Common myeloid progenitor, CD34-positive (primary cell): ENCODE measurements at regions of chr11 and their contacts with region 1.

Region 1: DNA sequence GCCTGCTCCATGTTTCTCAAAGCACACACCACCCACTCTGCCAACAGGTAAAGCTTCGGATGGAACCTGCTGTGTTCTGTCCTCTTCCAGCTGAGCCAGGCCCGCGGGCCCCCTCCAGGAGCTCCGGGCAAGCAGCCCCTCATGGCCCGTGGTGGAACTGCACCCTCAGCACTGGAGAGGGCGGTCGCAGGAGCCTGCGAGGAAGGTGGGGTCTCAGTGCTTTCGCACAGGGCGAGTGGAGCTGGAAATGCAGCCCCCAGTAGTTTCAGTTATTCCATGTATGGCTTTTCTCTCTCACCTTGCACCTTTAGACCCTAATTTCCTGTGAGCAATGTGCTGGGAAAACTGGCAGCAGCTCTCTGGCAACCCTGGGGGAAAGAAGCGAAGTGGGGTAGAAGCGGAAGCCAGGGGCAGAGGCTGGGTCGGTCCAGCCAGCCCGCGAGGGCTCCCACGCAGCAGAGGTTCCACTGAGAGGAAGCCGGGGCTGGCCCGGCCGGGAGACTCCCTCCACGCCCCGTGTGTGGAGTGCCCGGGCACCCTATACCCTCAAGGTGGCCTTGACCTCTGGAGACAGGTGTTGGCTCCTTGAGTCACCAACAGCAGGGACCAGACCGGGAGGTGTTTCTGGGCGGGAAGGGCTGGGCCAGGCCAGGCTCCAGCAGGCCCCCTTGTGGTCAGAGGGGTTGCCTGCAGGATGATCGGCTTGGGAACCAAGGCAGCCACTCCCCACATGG is 119.9 kb upstream of the TMEM45B start:
- DNase-seq: peak; percentile 69 to 86 (median 85)
- H3K4me3 ChIP-seq: peak overlapping the region; percentile 3 to 76 (median 68)
- H3K27ac ChIP-seq: no peak overlapping the region
- H3K4me1 ChIP-seq: peaks cover 0 to 10% (median 0%) of the 10 kb centered on the region in 4 experiments
- H3K27me3 ChIP-seq: peaks cover 0 to 11% (median 9%) of the 10 kb centered on the region in 5 experiments

Region 2: GRCh38 chr11:129375751-129376657 is 319.7 kb before region 1 on chr11 and contains the start of gene BARX2:
- CTCF ChIA-PET with region 1: interaction called, 26 read pairs
- POLR2A ChIA-PET with region 1: interaction called, 3 read pairs
- DNase-seq: peak; percentile 57 to 72 (median 67)
- H3K4me3 ChIP-seq: peak within 1 kb of the TSS in 6 of 7 experiments; percentile 23 to 63 (median 34)
- H3K27ac ChIP-seq: no peak within 1 kb of the TSS
- H3K4me1 ChIP-seq: peaks cover 0 to 34% (median 31%) of the 10 kb centered on the region in 4 experiments
- H3K27me3 ChIP-seq: peaks cover 24 to 98% (median 55%) of the 10 kb centered on the region in 5 experiments

Region 3: DNA sequence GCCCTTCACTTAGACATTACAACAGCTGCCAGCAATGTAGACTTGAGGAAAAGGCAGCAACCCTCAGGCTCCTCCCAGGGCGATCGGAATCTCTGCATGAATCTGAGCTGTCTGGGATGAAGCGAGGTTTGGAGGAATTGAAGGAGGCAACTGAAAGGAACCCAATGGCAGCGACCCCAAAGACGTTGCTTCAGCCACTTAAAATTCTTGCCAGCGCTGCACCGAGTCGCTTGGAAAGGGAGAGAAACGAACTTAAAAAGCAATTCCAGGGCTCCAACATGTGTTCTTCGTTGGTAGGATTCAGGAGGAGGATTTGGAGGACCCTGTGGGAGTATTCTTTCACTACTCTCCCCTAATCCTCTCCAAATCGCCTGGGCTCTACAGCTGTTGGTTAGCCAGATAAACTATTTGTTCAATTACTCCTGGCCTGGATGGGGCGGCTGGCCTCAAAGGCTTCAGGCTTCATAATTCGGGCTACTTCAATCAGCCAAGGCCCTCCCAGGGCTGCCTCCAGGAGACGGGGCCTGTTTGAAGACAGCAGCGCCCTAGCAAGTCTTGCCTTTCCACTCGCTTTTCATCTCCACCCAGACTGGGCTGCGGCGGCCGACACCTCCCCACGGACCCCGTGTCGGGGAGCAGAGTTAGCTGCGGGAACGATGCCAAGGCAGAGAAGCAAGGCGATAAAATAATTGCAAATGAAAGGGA is 47.5 kb after region 1 on chr11:
- CTCF ChIA-PET with region 1: no interaction called
- POLR2A ChIA-PET with region 1: no interaction called
- DNase-seq: no peak
- H3K4me3 ChIP-seq: no peak overlapping the region
- H3K27ac ChIP-seq: no peak overlapping the region
- H3K4me1 ChIP-seq: no peaks in the 10 kb centered on the region
- H3K27me3 ChIP-seq: peaks cover 0 to 31% (median 10%) of the 10 kb centered on the region in 5 experiments

Region 4: DNA sequence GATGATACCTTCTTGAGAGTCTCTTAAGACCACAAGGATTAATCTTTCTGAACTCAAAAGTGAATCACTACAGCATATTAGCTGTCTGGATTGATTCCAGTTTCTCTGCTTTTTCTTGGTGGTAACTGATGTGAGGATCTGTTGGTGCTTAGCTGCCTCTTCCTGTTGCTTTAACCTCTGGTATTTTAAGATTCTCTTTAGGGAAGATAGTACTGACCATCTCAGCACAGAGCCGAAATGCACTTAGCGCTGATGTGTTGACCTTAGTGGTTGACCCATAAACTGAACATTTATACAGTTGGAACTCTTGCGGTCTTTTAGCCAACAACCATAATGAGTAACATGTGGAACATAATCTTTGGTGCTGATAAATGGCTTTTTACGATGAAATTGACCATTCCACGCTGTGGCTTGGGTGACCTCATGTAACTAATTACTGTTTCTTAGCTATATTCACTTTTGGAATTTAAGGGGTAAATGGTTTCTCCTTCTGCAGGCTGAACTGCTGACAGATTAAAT is 407.6 kb after region 1 on chr11:
- CTCF ChIA-PET with region 1: no interaction called
- POLR2A ChIA-PET with region 1: no interaction called
- DNase-seq: no peak
- H3K4me3 ChIP-seq: no peak overlapping the region
- H3K27ac ChIP-seq: no peak overlapping the region
- H3K4me1 ChIP-seq: peaks cover 0 to 23% (median 6%) of the 10 kb centered on the region in 4 experiments
- H3K27me3 ChIP-seq: no peaks in the 10 kb centered on the region

Region 5: DNA sequence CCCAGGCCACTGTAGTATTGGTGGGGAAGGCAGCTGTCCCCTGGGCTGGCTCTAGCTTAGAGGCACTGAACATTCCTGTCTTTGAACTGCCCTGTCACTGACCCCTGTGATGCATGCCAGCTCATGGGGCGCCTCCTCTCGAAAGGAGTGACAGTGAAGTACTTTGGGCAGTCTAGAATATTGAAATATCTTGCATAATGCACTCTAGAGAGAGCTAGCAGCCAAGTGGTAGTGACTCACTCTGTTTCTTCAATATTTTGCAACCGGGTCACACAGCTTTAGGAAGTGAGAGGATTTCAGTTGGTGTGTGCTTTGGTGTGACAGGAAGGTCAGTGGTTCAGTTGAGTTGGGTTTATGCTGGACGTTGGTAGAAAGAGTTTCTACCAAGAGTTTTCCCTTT is 428.4 kb after region 1 on chr11:
- CTCF ChIA-PET with region 1: no interaction called
- POLR2A ChIA-PET with region 1: no interaction called
- DNase-seq: peak in 2 of 3 donors; percentile 51 to 56
- H3K4me3 ChIP-seq: no peak overlapping the region
- H3K27ac ChIP-seq: peak overlapping the region in 1 of 2 experiments; percentile 32
- H3K4me1 ChIP-seq: peaks cover 14 to 24% (median 17%) of the 10 kb centered on the region in 4 experiments
- H3K27me3 ChIP-seq: no peaks in the 10 kb centered on the region